ENCODE measurements at regions of chr7 and their contacts with region 1.

Region 1: GRCh38 chr7:87615197-87615596 is 13.0 kb upstream of the RUNDC3B start:
- DNase-seq: no peak

Region 2: GRCh38 chr7:87252166-87252565 is 363.0 kb before region 1 on chr7:
- intact Hi-C with region 1: no loop called
- DNase-seq: no peak

Region 3: DNA sequence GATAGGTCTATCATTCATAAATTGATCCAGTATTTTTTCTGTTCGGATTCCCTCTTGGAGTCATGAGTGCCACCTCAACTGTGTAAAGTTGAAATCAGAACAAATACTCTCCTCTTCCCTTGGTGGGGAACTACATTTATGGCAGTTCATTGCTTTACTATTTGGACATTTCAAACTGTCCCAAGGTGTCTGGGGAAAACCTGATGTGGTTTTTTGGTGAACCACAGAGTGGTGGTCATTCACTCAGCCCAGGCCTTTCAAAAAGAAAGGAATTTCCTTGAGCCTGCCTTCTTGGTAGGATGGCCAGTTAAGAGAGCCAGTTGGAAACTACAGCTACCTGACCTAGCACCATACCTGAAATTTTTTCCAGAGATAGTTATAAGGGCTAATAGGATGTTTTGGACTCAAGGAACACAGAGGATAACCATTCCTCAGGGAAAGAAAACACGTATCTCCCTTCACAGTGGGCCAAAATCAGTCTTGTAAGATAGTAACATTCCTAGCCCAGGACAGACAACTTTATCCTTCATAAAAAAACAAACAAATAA is 73.5 kb before region 1 on chr7:
- intact Hi-C with region 1: no loop called
- DNase-seq: no peak

Region 4: GRCh38 chr7:87564289-87564963 is 50.8 kb before region 1 on chr7:
- intact Hi-C with region 1: loop called in 1 of 2 experiments (anchors 2 kb)
- DNase-seq: no peak

Region 5: GRCh38 chr7:87779806-87780205 is 164.6 kb after region 1 on chr7:
- intact Hi-C with region 1: no loop called
- DNase-seq: no peak